HEK293 (cell line): ENCODE measurements at regions of chr11 and their contacts with region 1.

Region 1: GRCh38 chr11:86193297-86194095 is 51.1 kb upstream of the EED start:
- H3K4me3 ChIP-seq: peak overlapping the region; percentile 19; the same call in 1 of the 2 replicates
- H3K27ac ChIP-seq: no peak overlapping the region
- H3K4me1 ChIP-seq: no peaks in the 10 kb centered on the region
- CTCF ChIP-seq: peak; percentile 15; the same call in 1 of the 2 replicates

Region 2: GRCh38 chr11:86068951-86069407 is 124.5 kb before region 1 on chr11 and contains the start of gene PICALM:
- CTCF ChIA-PET with region 1: interaction called, 19 read pairs
- POLR2A ChIA-PET with region 1: interaction called, 8 read pairs
- H3K4me3 ChIP-seq: peak within 1 kb of the TSS; percentile 69
- H3K27ac ChIP-seq: peak within 1 kb of the TSS; percentile 67
- H3K4me1 ChIP-seq: peaks cover 3% of the 10 kb centered on the region; the same call in 1 of the 2 replicates
- CTCF ChIP-seq: no peak

Region 3: GRCh38 chr11:86205421-86206336 is 12.2 kb after region 1 on chr11:
- CTCF ChIA-PET with region 1: interaction called, 11 read pairs
- POLR2A ChIA-PET with region 1: interaction called, 3 read pairs
- H3K4me3 ChIP-seq: no peak overlapping the region
- H3K27ac ChIP-seq: no peak overlapping the region
- H3K4me1 ChIP-seq: no peaks in the 10 kb centered on the region
- CTCF ChIP-seq: no peak

Region 4: GRCh38 chr11:86230921-86231430 is 37.5 kb after region 1 on chr11:
- CTCF ChIA-PET with region 1: interaction called, 10 read pairs
- POLR2A ChIA-PET with region 1: no interaction called
- H3K4me3 ChIP-seq: no peak overlapping the region
- H3K27ac ChIP-seq: no peak overlapping the region
- H3K4me1 ChIP-seq: no peaks in the 10 kb centered on the region
- CTCF ChIP-seq: no peak